ENCODE measurements at regions of chr4 and their contacts with region 1.

Region 1: DNA sequence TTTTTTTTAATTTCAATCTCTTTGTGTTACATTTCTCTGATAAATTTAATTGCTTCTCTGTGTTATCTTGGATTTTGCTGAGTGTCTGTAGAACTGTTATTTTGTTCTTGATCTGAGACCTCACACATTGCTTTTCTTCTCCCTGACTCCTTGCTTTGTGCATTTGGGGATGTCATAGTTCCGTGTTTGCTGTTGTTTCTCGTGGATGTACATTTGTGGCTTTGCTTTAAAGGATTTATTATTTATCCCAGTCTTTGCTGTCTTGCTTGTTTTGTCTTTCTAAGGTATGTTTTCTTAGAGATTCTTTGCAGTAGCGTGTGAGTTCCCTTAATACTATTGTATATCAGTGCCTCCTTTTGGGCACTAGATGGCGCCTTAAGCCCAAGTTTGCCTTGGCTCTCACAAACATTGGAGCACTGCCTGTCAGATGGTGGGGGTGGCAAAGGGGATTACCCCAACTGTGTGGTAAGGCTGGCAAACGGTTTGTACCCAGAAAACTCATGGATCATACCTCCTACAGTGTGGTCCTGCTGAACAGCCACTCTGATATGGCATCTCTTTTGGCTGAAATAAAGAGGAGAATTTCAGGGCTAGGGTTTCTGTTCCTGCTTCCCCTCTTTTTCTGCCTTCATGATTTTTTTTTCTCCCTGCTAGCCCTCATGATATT is 96.4 kb downstream of the PGRMC2 start:
- ATAC-seq: peak; percentile 85 to 97 (median 92)
- H3K4me3 ChIP-seq: no peak overlapping the region
- H3K27ac ChIP-seq: no peak overlapping the region
- H3K4me1 ChIP-seq: no peaks in the 10 kb centered on the region

Region 2: DNA sequence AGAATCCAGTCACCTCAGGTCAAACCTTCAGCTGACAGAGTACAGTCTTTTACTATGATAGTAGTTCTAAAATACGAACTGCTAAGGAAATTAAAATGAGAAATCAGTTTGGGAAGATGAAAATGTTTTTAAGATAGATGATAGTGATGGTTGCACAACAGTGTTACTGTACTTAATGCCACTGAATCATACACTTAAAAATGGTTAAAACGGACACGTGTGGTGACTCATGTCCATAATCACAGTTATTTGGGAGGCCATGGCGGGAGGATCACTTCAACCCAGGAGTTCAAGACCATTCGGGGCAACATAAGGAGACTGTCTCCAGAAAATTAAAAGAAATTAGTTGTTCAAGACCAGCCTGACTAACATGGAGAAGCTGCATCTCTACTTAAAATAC is 184.7 kb before region 1 on chr4:
- in situ Hi-C with region 1: no loop called
- ATAC-seq: no peak
- H3K4me3 ChIP-seq: no peak overlapping the region
- H3K27ac ChIP-seq: no peak overlapping the region
- H3K4me1 ChIP-seq: no peaks in the 10 kb centered on the region

Region 3: DNA sequence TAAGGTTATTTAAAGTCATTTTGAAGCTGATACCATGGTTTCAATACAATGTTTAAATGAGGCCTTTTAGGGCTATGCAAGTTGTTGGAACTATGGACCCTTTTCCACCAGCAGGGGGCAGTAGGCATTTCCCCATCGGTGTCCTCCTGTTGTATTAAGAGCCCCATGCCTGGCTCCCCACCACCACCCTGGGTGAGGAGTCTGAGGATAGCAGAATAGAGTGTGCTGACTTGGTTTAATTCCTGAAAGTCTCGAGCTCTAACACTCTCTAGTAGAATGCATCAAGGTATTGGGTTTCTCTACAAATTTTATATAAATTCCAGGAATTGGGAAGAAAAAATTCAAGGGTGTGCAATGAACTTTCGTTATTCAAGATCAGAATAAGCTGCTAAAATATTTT is 383.5 kb after region 1 on chr4:
- in situ Hi-C with region 1: loop called in 1 of 9 experiments (anchors 25 kb)
- ATAC-seq: peak in 3 of 8 experiments; percentile 64 to 85 (median 80)
- H3K4me3 ChIP-seq: no peak overlapping the region
- H3K27ac ChIP-seq: no peak overlapping the region
- H3K4me1 ChIP-seq: peaks cover 0 to 2% of the 10 kb centered on the region in 2 donors

Region 4: GRCh38 chr4:128863312-128864075 is 672.2 kb after region 1 on chr4:
- in situ Hi-C with region 1: loop called in 5 of 9 experiments (anchors 25 kb)
- ATAC-seq: peak; percentile 12 to 87 (median 76)
- H3K4me3 ChIP-seq: no peak overlapping the region
- H3K27ac ChIP-seq: peak overlapping the region in 1 of 2 donors; percentile 8
- H3K4me1 ChIP-seq: peaks cover 0 to 2% of the 10 kb centered on the region in 2 donors

Region 5: GRCh38 chr4:129490516-129490915 is 1299.3 kb after region 1 on chr4:
- in situ Hi-C with region 1: no loop called
- ATAC-seq: no peak
- H3K4me3 ChIP-seq: no peak overlapping the region
- H3K27ac ChIP-seq: no peak overlapping the region
- H3K4me1 ChIP-seq: peaks cover 0 to 3% of the 10 kb centered on the region in 2 donors

Measured in motor neuron (in vitro differentiated cells).